ENCODE measurements at regions of chr20 and their contacts with region 1.

Region 1: GRCh38 chr20:17536944-17537444 is 5.8 kb upstream of the BFSP1 start:
- DNase-seq: peak; percentile 80
- H3K4me3 Mint-ChIP-seq: no peak overlapping the region
- H3K27ac Mint-ChIP-seq: no peak overlapping the region
- H3K4me1 Mint-ChIP-seq: peaks cover 22% of the 10 kb centered on the region
- H3K27me3 Mint-ChIP-seq: peaks cover 38% of the 10 kb centered on the region

Region 2: GRCh38 chr20:17569616-17570346 is 32.8 kb after region 1 on chr20 and contains the start of gene DSTN:
- CTCF ChIA-PET with region 1: interaction called, 10 read pairs
- DNase-seq: peak; percentile 91
- H3K4me3 Mint-ChIP-seq: peak within 1 kb of the TSS; percentile 86
- H3K27ac Mint-ChIP-seq: peak within 1 kb of the TSS; percentile 90
- H3K4me1 Mint-ChIP-seq: peaks cover 44% of the 10 kb centered on the region
- H3K27me3 Mint-ChIP-seq: peaks cover 25% of the 10 kb centered on the region

Region 3: DNA sequence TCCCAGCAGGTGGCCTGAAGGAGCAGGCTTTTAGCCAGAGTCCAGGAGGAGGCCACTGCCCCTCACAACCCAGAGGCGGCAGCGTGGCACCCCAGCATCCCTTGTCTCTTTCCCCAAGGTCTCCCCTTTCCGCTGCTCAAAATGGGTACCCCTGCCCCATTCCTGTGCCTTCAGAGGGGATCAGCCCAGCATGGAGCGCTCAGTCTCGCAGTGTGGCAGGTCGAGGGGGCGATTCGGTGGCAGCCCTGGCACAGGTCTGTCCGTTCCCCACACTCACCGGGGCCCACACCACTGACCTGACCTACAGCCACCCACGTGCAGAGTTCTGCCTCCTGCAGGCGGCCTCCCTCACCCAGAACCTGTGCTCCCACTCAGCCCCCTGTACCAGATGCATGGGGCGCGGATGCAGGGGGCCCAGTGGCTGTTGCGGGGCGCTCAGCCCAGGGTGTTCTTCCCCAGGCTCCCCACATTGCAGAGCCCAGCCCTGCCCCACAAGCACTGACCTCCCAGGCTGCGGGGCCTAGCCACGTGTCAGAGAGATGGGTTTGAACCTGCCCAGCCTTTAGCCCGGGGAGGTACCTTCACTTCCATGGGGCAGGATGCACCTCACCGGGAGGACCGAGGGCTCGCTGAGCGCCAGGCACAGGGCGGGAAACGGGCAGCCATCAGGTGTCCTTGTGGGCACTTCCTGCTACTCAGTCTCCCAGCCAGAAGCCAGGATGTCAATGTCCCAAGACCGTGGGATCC is 74.7 kb after region 1 on chr20:
- CTCF ChIA-PET with region 1: interaction called, 11 read pairs
- DNase-seq: no peak
- H3K4me3 Mint-ChIP-seq: peak overlapping the region; percentile 63
- H3K27ac Mint-ChIP-seq: peak overlapping the region; percentile 93
- H3K4me1 Mint-ChIP-seq: peaks cover 45% of the 10 kb centered on the region
- H3K27me3 Mint-ChIP-seq: no peaks in the 10 kb centered on the region

Region 4: GRCh38 chr20:17617551-17618223 is 80.7 kb after region 1 on chr20:
- CTCF ChIA-PET with region 1: interaction called, 20 read pairs
- DNase-seq: peak; percentile 59
- H3K4me3 Mint-ChIP-seq: no peak overlapping the region
- H3K27ac Mint-ChIP-seq: peak overlapping the region; percentile 69
- H3K4me1 Mint-ChIP-seq: peaks cover 3% of the 10 kb centered on the region
- H3K27me3 Mint-ChIP-seq: no peaks in the 10 kb centered on the region

Region 5: GRCh38 chr20:17898548-17898994 is 361.6 kb after region 1 on chr20:
- CTCF ChIA-PET with region 1: interaction called, 11 read pairs
- DNase-seq: peak; percentile 77
- H3K4me3 Mint-ChIP-seq: no peak overlapping the region
- H3K27ac Mint-ChIP-seq: no peak overlapping the region
- H3K4me1 Mint-ChIP-seq: peaks cover 13% of the 10 kb centered on the region
- H3K27me3 Mint-ChIP-seq: peaks cover 62% of the 10 kb centered on the region